PC-9 (cell line): ENCODE measurements at regions of chr12 and their contacts with region 1.

Region 1: DNA sequence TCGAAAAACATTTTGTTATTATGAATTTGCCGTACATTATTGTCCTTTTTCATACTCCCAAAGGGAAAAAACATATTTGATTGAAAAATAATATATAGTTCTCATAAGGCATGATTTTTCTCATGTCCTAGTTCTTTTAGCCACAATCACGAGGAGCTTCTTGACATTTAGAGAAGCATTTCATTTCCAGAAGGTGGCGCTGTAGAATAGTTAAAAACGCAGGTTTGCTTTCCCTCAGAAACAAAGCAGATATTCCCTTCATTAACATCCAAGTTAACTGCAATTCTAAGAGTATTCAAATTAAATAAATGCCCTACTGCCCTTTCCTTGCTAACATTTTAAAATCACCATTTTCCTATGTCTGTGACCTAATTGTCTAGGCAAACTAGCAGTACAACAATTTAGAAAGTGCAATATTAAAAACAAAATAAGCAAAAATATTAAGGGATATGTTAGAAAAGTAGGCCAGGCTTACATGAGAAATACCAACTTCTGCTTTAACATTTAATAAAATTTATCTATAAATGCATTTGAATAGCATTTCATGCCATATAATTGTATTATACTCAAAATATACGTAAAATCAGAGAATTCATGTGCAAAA is 10.9 kb upstream of the PIK3C2G start:
- DNase-seq: peak in 1 of 2 experiments; percentile 21
- H3K4me3 ChIP-seq: no peak overlapping the region
- H3K27ac ChIP-seq: no peak overlapping the region
- H3K4me1 ChIP-seq: no peaks in the 10 kb centered on the region
- H3K27me3 ChIP-seq: no peaks in the 10 kb centered on the region
- CTCF ChIP-seq: peak; percentile 84

Region 2: GRCh38 chr12:18183141-18183540 is 67.3 kb before region 1 on chr12:
- CTCF ChIA-PET with region 1: no interaction called
- POLR2A ChIA-PET with region 1: no interaction called
- intact Hi-C with region 1: no loop called
- DNase-seq: no peak
- H3K4me3 ChIP-seq: no peak overlapping the region
- H3K27ac ChIP-seq: no peak overlapping the region
- H3K4me1 ChIP-seq: no peaks in the 10 kb centered on the region
- H3K27me3 ChIP-seq: no peaks in the 10 kb centered on the region
- CTCF ChIP-seq: no peak

Region 3: DNA sequence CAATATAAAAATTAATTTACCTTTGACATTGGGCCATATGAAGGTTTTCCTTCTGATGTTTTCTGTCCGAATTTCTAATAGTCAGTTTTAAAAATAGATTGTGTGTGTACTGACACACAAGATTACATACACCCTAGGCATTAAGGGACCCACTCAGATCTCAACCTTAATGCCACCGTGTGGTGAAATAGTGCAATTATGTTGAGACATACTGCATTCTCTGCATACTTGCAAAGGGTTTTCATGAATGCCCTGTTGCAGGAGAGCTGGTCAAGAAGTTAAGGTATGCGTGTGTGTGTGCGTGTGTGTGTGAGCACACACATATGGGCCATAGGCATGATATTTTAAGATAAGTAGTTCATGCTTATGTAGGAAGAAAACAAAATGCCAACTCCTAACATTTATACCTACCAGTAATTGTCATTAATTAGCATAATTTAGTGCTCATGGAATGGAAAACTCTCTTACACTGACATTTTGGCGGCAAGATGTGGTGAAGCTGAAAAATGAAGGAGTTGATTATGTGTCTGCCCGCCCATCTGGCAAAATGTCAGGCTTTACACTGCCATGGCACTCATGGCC is 69.7 kb after region 1 on chr12:
- CTCF ChIA-PET with region 1: interaction called, 9 read pairs
- POLR2A ChIA-PET with region 1: no interaction called
- intact Hi-C with region 1: loop called (anchors 1 kb)
- DNase-seq: peak; percentile 50 to 68
- H3K4me3 ChIP-seq: no peak overlapping the region
- H3K27ac ChIP-seq: no peak overlapping the region
- H3K4me1 ChIP-seq: 0 out of 2 replicates have a peak, but pooled peaks cover 6% of the 10 kb centered on the region
- H3K27me3 ChIP-seq: no peaks in the 10 kb centered on the region
- CTCF ChIP-seq: peak; percentile 59

Region 4: DNA sequence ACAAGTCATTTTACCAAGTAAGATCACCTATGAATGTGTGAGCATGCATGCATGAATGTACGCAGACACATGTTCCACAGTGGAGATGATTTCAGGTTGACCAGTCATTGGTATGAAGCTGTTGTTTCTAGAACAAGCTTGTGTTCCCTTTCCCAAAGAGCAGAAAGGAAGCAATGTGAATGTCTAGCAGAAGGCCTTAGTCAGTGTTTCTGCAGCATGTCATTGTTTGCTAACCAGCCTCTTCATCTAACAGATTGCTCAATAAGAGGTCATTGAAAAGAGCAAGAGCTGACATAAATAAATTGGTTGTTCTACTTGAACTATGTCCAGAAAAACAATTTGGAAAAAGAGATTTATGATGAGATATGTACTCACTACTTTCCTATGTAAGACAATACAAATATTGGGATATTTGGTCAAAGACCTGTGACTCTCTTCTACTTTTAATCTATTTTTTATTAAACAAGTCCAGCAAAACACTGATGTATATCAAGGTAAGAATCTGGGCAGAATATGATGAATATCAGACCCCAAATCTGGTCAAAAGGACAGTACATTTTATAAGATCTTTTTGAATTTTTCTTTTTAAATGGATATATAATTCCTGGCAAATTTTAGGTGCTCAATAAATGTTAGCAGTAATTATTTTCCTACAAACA is 296.1 kb after region 1 on chr12:
- CTCF ChIA-PET with region 1: no interaction called
- POLR2A ChIA-PET with region 1: no interaction called
- intact Hi-C with region 1: loop called (anchors 5 kb)
- DNase-seq: peak in 1 of 2 experiments; percentile 1
- H3K4me3 ChIP-seq: no peak overlapping the region
- H3K27ac ChIP-seq: no peak overlapping the region
- H3K4me1 ChIP-seq: peaks cover 11% of the 10 kb centered on the region
- H3K27me3 ChIP-seq: no peaks in the 10 kb centered on the region
- CTCF ChIP-seq: no peak

Region 5: DNA sequence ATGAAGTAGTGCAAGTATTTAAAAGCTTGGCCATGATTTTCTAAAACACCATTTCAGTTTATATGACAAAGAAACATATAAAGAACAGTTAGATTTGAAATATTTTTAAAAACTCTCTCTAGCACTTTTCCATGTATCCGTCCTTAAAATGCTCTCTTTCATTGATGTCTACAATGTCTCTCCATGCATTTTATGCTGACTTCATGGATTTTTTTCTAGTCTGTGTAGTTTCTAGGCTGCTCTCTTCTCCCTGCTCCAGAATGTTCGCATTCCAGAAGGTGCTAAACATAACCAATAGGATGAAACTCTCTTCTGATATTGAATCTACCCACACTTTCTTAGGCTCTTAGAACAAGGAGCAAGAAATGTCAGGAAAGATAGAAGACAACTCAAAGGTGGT is 362.6 kb after region 1 on chr12:
- CTCF ChIA-PET with region 1: no interaction called
- POLR2A ChIA-PET with region 1: no interaction called
- intact Hi-C with region 1: no loop called
- DNase-seq: no peak
- H3K4me3 ChIP-seq: no peak overlapping the region
- H3K27ac ChIP-seq: no peak overlapping the region
- H3K4me1 ChIP-seq: no peaks in the 10 kb centered on the region
- H3K27me3 ChIP-seq: no peaks in the 10 kb centered on the region
- CTCF ChIP-seq: no peak

Region 6: DNA sequence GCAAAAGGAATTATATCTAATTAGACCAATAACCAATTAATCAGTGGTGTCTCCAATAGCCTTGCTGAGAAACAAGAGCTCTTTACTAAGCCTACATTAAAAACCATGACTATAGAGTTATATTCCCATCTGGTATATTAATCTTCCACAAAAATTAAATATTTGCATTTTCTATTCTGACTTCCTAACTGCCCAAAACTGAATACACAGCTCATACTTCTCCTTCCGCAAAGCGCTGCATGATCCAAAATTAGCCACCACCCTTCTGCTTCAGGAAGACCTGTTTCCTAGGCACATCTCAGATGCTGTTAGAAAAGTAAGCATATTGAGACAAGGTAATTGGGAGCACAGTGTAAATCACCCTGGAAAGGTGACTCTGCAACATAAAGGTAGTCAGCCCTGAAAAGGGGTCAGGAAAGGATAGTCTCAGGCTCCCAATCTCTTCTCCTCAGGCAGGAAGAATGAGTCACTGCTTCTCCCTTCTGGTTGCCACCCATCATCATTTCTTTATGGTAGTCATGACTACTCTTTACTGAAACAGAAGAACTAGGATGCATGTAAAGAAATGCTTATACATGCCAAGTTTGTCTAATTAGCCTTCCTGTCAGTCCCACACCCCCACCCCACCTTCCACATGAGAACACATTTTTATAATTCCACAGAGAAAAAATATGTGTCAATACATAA is 433.1 kb after region 1 on chr12:
- CTCF ChIA-PET with region 1: no interaction called
- POLR2A ChIA-PET with region 1: no interaction called
- intact Hi-C with region 1: loop called (anchors 10 kb)
- DNase-seq: no peak
- H3K4me3 ChIP-seq: no peak overlapping the region
- H3K27ac ChIP-seq: no peak overlapping the region
- H3K4me1 ChIP-seq: no peaks in the 10 kb centered on the region
- H3K27me3 ChIP-seq: no peaks in the 10 kb centered on the region
- CTCF ChIP-seq: no peak

Region 7: GRCh38 chr12:18700271-18700670 is 449.9 kb after region 1 on chr12:
- CTCF ChIA-PET with region 1: no interaction called
- POLR2A ChIA-PET with region 1: no interaction called
- intact Hi-C with region 1: no loop called
- DNase-seq: no peak
- H3K4me3 ChIP-seq: no peak overlapping the region
- H3K27ac ChIP-seq: no peak overlapping the region
- H3K4me1 ChIP-seq: peaks cover 6% of the 10 kb centered on the region; the same call in 1 of the 2 replicates
- H3K27me3 ChIP-seq: no peaks in the 10 kb centered on the region
- CTCF ChIP-seq: no peak

Region 8: GRCh38 chr12:18861287-18861858 is 611.0 kb after region 1 on chr12:
- CTCF ChIA-PET with region 1: no interaction called
- POLR2A ChIA-PET with region 1: no interaction called
- intact Hi-C with region 1: loop called (anchors 2 kb)
- DNase-seq: no peak
- H3K4me3 ChIP-seq: no peak overlapping the region
- H3K27ac ChIP-seq: no peak overlapping the region
- H3K4me1 ChIP-seq: no peaks in the 10 kb centered on the region
- H3K27me3 ChIP-seq: no peaks in the 10 kb centered on the region
- CTCF ChIP-seq: peak; percentile 82

Region 9: DNA sequence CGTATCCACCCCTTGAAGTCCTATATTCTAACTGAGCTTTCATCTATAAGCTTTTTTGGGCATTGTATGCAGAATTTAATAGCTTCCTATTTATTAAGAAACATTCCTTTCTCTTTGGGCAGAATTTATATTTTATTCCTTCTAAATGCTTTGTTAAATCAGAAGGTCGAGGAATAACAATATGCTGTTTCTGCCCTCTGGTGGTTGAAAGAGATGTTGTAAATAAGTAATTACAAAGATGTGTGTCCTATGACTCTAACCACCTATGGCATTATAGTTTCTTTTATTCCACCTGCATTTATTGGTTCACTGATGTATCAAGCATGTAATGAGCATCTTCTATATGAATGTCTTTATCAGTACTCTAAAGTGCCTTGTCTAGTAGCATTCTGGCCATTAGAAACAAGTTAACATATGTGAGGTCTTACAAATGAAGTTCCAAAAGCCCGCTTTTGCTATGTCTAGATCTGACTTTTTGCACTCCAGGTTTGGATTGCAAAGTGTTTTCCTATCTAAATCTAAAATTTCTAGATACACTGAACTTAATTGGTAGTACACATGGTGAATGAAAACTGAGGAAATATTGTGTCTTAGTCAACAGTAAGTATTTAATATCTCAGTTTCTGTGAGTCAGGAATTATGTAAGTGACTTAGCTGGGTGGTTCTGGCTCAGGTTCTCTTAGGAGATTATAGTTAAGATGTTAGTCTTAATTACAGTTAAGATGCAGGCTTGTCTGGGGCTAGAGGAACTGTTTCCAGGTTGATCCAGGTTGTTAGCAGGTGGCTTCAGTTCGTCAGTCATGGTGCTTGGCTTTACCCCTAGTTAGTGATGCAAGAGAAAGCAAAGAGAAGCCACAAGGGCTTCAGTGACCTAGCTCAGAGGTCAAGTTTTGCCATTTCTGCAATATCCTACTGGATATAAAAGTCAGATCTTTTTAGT is 936.6 kb after region 1 on chr12:
- CTCF ChIA-PET with region 1: no interaction called
- POLR2A ChIA-PET with region 1: no interaction called
- intact Hi-C with region 1: loop called (anchors 1 kb)
- DNase-seq: peak in 1 of 2 experiments; percentile 42
- H3K4me3 ChIP-seq: no peak overlapping the region
- H3K27ac ChIP-seq: no peak overlapping the region
- H3K4me1 ChIP-seq: no peaks in the 10 kb centered on the region
- H3K27me3 ChIP-seq: no peaks in the 10 kb centered on the region
- CTCF ChIP-seq: peak; percentile 83

Region 10: GRCh38 chr12:19643635-19644034 is 1393.2 kb after region 1 on chr12:
- CTCF ChIA-PET with region 1: no interaction called
- POLR2A ChIA-PET with region 1: no interaction called
- intact Hi-C with region 1: loop called (anchors 1 kb)
- DNase-seq: peak in 1 of 2 experiments; percentile 11
- H3K4me3 ChIP-seq: no peak overlapping the region
- H3K27ac ChIP-seq: no peak overlapping the region
- H3K4me1 ChIP-seq: no peaks in the 10 kb centered on the region
- H3K27me3 ChIP-seq: no peaks in the 10 kb centered on the region
- CTCF ChIP-seq: peak; percentile 57